MCF 10A (cell line): ENCODE measurements at regions of chr17 and their contacts with region 1.

Region 1: GRCh38 chr17:3213587-3213986 is 6.1 kb downstream of the OR1A1 start:
- DNase-seq: no peak
- H3K4me3 Mint-ChIP-seq: no peak overlapping the region
- H3K27ac Mint-ChIP-seq: no peak overlapping the region
- H3K4me1 Mint-ChIP-seq: no peaks in the 10 kb centered on the region
- H3K27me3 Mint-ChIP-seq: peaks cover 36% of the 10 kb centered on the region
- CTCF ChIP-seq: no peak

Region 2: GRCh38 chr17:3167574-3167973 is 46.0 kb before region 1 on chr17:
- CTCF ChIA-PET with region 1: no interaction called
- POLR2A ChIA-PET with region 1: no interaction called
- intact Hi-C with region 1: no loop called
- DNase-seq: no peak
- H3K4me3 Mint-ChIP-seq: no peak overlapping the region
- H3K27ac Mint-ChIP-seq: no peak overlapping the region
- H3K4me1 Mint-ChIP-seq: no peaks in the 10 kb centered on the region
- H3K27me3 Mint-ChIP-seq: peaks cover 61% of the 10 kb centered on the region
- CTCF ChIP-seq: no peak

Region 3: DNA sequence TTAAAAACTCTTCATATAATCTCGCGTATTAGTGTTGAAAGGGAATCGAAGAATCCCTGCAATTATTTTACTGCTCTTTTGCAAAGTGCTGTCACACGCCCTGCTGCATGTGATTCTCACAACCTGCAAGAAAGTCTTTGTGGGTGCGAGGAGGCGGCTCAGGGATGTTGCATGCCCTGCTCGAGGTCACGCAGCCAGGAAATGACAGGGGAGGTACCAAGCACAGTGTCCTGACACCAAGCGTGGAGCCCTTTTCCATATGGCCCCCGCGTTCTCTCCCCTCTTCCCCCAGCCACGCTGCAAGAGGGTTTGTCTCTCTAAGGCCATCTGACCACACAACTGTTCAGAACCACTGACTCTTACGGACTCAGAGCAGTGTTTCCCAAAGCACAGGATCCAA is 47.0 kb after region 1 on chr17:
- CTCF ChIA-PET with region 1: no interaction called
- POLR2A ChIA-PET with region 1: no interaction called
- intact Hi-C with region 1: loop called (anchors 5 kb)
- DNase-seq: no peak
- H3K4me3 Mint-ChIP-seq: no peak overlapping the region
- H3K27ac Mint-ChIP-seq: no peak overlapping the region
- H3K4me1 Mint-ChIP-seq: no peaks in the 10 kb centered on the region
- H3K27me3 Mint-ChIP-seq: peaks cover 67% of the 10 kb centered on the region
- CTCF ChIP-seq: no peak